IMR-90 (cell line): ENCODE measurements at regions of chr12 and their contacts with region 1.

Region 1: DNA sequence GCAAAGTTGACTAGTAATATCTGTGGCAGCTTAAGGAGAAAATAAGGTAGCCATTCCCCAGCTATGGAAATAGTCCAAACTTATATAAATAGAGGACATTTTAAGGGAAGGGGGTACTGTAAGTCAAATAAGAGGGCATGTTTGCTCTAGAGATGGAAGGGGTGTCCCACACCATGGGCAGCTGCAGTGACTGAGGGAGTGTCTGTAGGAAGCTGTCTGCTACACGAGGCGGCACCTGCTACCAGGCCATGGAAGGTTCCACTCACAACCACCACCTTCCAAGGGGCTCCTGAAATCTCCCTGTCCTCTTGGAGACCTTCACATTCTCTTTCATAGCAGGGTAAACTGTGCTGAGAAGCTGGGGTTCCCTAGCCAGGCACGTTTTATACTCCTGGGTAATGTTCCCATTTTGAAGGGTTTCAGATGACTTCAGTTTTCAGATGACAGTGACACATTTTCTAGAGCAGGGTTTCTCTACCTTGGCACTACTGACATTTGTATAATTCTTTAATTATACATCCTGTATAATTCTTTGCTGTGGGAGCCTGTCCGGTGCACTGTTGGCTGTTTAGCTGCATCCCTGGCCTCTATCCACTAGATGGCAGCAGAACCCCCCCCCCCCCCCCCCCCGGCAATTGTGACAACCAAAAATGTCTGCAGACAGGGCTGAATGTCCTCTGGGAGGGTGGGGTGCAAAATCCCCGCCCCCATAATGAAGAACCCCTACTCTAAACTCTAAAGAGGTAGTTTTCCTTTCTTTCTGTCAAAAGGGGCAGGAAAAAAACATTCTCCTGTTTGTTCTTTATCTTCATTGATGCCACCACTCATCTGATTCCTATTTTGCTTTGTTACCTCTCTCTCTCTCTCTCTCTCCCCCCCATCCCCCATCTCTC is 11.6 kb upstream of the SMCO2 start:
- DNase-seq: no peak
- ATAC-seq: peak; percentile 50; the same call in 1 of the 2 replicates
- H3K4me3 ChIP-seq: no peak overlapping the region
- H3K27ac ChIP-seq: no peak overlapping the region
- H3K4me1 ChIP-seq: peaks cover 6% of the 10 kb centered on the region
- H3K27me3 ChIP-seq: no peaks in the 10 kb centered on the region
- CTCF ChIP-seq: peak; percentile 49
- POLR2A ChIP-seq: no peak
- RAD21 ChIP-seq: peak; percentile 35

Region 2: DNA sequence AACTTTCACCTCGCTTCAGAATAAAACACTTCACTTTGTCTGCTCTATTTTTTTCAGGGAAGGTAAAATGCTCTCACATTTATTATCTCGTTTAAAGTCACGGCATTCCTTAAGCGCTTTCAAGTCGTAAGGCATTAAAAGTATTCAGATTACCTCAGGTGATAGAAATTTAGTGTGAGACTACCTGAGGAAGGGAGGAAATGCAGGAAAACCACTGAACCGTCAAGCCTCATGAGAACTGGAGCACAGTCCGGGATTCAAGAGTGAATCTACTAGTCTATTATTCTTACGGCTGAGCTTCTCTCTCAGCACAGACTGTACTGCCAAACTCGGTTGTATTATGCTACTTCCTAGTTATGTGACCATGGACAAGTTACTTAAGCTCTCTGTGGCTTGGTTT is 80.8 kb after region 1 on chr12:
- CTCF ChIA-PET with region 1: interaction called, 4 read pairs
- POLR2A ChIA-PET with region 1: no interaction called
- dilution Hi-C with region 1: no loop called
- in situ Hi-C with region 1: loop called (anchors 5 kb)
- intact Hi-C with region 1: no loop called
- DNase-seq: no peak
- ATAC-seq: no peak
- H3K4me3 ChIP-seq: no peak overlapping the region
- H3K27ac ChIP-seq: no peak overlapping the region
- H3K4me1 ChIP-seq: peaks cover 3% of the 10 kb centered on the region
- H3K27me3 ChIP-seq: no peaks in the 10 kb centered on the region
- CTCF ChIP-seq: no peak
- POLR2A ChIP-seq: no peak
- RAD21 ChIP-seq: no peak

Region 3: GRCh38 chr12:27635349-27635972 is 200.5 kb after region 1 on chr12:
- CTCF ChIA-PET with region 1: no interaction called
- POLR2A ChIA-PET with region 1: no interaction called
- dilution Hi-C with region 1: no loop called
- in situ Hi-C with region 1: loop called (anchors 5 kb)
- intact Hi-C with region 1: loop called (anchors 5 kb)
- DNase-seq: peak; percentile 77
- ATAC-seq: peak; percentile 49
- H3K4me3 ChIP-seq: no peak overlapping the region
- H3K27ac ChIP-seq: no peak overlapping the region
- H3K4me1 ChIP-seq: peaks cover 5% of the 10 kb centered on the region
- H3K27me3 ChIP-seq: no peaks in the 10 kb centered on the region
- CTCF ChIP-seq: peak; percentile 78
- POLR2A ChIP-seq: no peak
- RAD21 ChIP-seq: peak; percentile 90